GM13977 (cell line): ENCODE measurements at regions of chr9 and their contacts with region 1.

Region 1: DNA sequence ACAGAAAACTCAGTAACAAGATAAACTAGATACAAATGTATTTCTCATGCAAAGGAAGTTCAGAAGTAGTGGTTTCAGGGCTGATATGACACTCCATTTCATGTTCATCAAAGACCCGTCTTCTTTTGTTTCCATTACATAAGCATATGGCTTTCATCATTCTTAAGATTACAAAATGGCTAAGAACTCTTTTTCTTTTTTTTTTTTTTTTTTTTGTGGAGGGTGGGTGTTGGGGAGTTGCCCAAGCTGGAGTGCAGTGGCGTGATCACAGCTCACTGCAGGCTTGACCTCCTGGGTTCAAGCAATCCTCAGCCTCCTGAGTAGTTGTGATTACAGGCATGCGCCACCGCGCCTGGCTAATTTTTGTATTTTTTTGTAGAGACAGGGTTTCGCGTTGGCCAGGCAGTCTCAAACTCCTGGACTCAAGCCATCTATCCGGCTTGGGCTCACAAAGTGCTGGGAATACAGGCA is 22.0 kb upstream of the PTBP3 start:
- DNase-seq: peak; percentile 41
- CTCF ChIP-seq: no peak

Region 2: GRCh38 chr9:112097712-112098688 is 257.5 kb before region 1 on chr9:
- in situ Hi-C with region 1: loop called (anchors 10 kb)
- DNase-seq: peak; percentile 66
- CTCF ChIP-seq: peak; percentile 84

Region 3: DNA sequence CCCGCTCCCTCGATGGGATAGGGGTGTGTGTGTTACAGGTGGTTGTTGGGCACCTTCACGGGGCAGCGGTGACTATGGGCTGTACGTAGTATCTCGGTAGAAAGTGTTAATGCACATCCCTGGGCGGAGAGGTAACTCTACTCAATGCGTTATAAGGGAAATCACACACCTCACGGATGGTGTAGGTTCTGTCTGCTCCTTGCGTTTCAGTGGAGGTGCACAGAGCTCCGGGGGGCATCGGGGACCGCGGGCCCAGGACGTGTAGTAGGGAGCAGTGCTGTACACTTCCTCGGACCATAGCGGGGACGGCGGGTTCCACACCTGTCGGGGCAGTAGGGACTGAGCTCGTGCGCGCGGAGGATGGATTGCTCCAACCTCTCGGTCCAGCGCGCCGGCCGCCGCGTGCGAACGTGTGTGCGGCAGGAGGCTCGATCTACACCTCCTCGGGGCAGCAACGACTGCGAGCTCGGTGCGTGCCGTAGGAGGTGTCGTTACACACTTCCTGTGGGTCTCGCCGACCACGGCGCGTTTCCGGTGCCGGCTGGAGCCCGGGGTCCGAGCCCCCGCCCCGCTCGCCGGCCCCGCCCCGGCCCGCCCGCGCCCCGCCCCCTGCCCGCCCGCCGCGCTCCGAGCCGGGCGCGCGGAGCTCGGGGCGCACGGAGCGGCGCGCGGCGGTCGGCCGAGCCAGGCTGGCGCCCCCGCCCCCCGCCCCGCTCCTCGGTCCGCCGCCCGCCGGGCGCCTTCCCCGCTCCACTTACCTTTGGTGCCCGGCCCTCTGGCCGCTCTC is 131.0 kb after region 1 on chr9 and contains the start of gene KIAA1958:
- in situ Hi-C with region 1: no loop called
- DNase-seq: peak; percentile 96
- CTCF ChIP-seq: no peak